Activated CD8-positive, alpha-beta T cell treated with anti-CD3 and anti-CD28 coated beads, Interleukin-2, amount 10 ng/mL, durations not matched to agents 7 days and 5 days (primary cell): ENCODE measurements at regions of chr12 and their contacts with region 1.

Region 1: GRCh38 chr12:54749191-54749818 is 101.1 kb upstream of the DCD start:
- DNase-seq: peak; percentile 71
- ATAC-seq: peak; percentile 93
- H3K4me3 Mint-ChIP-seq: peak overlapping the region; percentile 55
- H3K27ac Mint-ChIP-seq: peak overlapping the region; percentile 16
- H3K4me1 Mint-ChIP-seq: peaks cover 21% of the 10 kb centered on the region
- H3K27me3 Mint-ChIP-seq: no peaks in the 10 kb centered on the region

Region 2: DNA sequence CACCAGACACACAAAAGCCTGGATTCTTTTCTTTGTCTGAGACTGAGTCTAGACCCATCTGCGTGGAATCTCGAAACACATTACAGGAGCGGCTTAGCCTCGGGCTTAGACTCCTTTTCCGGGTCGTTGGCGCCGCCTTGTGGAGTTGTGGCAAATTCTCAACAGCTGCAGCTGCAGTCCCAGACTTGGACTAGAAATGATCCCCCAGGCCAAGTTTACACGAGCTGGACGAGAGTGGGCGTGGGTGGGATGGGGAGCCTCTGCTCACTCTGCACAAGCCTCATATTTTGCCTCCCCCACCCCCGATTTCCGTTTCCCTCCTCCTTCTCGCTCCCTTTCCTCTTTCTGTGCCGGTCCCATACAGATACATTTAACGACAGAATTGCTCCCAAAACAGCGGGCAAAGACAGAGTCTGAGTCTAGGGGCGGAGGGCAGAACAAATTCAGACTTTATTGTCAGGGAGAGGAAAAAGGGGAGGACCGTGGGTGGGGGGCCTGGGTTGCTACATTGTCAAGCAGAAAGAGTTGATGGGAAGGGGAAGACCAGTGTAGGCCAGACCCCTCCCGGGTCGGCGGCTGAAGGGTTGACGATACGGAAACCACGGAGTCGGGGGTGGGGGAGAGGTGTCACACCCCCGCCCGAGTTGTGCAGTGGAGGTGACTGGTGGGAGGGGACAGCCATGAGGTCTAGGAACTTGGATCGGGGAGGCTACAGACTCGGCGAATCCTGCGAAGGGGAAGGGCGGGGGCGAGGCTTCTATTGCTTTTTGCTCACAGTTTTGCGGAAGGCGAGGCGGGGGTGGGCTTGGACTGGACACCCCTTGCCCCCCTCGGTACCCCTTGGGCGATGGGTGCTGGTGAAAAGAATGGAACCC is 380.4 kb before region 1 on chr12:
- CTCF ChIA-PET with region 1: no interaction called
- POLR2A ChIA-PET with region 1: no interaction called
- DNase-seq: peak; percentile 93
- ATAC-seq: peak; percentile 89
- H3K4me3 Mint-ChIP-seq: no peak overlapping the region
- H3K27ac Mint-ChIP-seq: peak overlapping the region; percentile 32
- H3K4me1 Mint-ChIP-seq: peaks cover 52% of the 10 kb centered on the region
- H3K27me3 Mint-ChIP-seq: peaks cover 4% of the 10 kb centered on the region

Region 3: DNA sequence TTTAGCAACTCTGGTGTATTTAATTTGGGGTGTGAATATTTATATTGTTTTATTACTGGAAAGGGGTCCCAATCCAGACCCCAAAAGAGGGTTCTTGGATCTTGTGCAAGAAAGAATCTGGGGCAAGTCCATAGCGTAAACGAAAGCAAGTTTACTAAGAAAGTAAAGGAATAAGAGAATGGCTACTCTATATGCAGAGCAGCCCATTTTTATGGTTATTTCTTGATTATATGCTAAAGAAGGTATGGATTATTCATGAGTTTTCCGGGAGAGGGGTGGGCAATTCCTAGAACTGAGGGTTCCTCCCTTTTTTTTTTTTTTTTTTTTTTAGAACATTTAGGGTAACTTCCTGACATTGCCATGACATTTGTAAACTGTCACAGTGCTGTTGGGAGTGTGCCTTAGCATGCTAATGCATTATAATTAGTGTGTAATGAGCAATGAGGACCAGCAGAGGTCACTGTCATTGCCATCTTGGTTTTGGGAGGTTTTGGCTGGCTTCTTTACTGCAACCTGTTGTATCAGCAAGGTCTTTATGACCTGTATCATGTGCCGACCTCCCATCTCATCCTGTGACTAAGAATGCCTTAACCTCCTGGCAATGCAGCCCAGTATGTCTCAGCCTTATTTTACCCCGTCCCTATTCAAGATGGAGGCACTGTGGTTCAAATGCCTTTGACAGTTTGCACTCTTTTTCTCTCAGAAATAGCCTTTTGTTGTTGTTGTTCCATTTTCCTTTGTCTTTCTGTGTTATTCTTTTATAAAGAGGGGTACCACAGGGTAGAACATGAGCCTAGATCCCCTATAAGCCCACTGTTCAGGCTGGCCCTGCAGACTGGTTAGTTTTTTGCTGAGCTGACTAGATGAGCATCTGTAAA is 25.7 kb before region 1 on chr12:
- CTCF ChIA-PET with region 1: interaction called, 29 read pairs
- POLR2A ChIA-PET with region 1: no interaction called
- DNase-seq: peak; percentile 58
- ATAC-seq: peak; percentile 57
- H3K4me3 Mint-ChIP-seq: no peak overlapping the region
- H3K27ac Mint-ChIP-seq: no peak overlapping the region
- H3K4me1 Mint-ChIP-seq: peaks cover 10% of the 10 kb centered on the region
- H3K27me3 Mint-ChIP-seq: peaks cover 20% of the 10 kb centered on the region

Region 4: DNA sequence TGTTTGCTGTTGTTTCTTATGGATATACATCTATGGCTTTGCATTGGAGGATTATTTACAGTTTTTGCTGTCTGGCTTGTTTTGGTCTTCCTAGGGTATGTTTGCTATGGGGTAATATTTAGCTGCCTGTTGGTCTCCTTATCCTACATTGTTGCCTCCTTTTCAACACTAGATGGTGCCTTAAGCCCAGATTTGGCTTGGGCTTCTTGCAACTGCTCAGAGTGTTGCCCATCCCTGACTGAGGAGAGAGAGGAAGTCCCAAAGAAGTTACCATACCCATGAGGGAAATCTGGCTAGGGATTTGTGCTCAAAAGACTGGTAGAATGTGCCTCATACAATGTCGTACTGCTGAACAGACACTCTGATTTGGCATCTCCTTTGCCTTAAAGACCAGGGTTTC is 10.4 kb after region 1 on chr12:
- CTCF ChIA-PET with region 1: interaction called, 50 read pairs
- POLR2A ChIA-PET with region 1: no interaction called
- DNase-seq: peak; percentile 33
- ATAC-seq: no peak
- H3K4me3 Mint-ChIP-seq: no peak overlapping the region
- H3K27ac Mint-ChIP-seq: no peak overlapping the region
- H3K4me1 Mint-ChIP-seq: peaks cover 12% of the 10 kb centered on the region
- H3K27me3 Mint-ChIP-seq: no peaks in the 10 kb centered on the region

Region 5: DNA sequence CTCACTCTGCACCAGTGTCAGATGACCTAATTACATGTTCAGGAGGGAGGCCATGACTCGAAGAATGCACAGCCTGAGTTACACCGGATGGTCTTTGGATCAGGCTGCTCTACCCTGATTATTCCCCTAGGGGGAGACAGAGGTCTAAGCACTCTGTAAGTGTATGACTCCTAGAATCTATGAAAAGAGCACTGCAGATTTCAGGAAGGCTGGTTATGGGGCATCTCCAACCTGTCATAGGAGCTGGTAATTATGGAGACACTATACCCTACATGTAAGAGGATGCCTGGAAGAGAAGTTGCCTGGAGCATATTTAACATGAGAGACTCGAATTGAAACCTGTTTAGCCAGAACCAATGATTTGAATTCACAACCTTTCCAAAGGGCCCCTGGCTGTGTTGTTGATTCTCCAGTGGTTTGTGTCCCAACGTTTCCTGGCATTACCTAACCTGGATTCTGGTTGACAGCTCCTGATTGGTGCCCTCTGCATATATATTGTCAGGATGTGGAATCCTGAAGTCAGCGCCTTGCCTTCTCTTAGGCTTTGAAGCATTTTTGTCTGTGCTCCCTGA is 104.8 kb after region 1 on chr12 and contains the start of gene MUCL1:
- CTCF ChIA-PET with region 1: interaction called, 24 read pairs
- POLR2A ChIA-PET with region 1: no interaction called
- DNase-seq: peak; percentile 87
- ATAC-seq: peak; percentile 99
- H3K4me3 Mint-ChIP-seq: no peak within 1 kb of the TSS
- H3K27ac Mint-ChIP-seq: no peak within 1 kb of the TSS
- H3K4me1 Mint-ChIP-seq: peaks cover 13% of the 10 kb centered on the region
- H3K27me3 Mint-ChIP-seq: no peaks in the 10 kb centered on the region
- total RNA-seq, gene MUCL1: not detected

Region 6: GRCh38 chr12:54958048-54958658 is 208.8 kb after region 1 on chr12:
- CTCF ChIA-PET with region 1: interaction called, 107 read pairs
- POLR2A ChIA-PET with region 1: no interaction called
- DNase-seq: peak; percentile 65
- ATAC-seq: peak; percentile 43
- H3K4me3 Mint-ChIP-seq: no peak overlapping the region
- H3K27ac Mint-ChIP-seq: no peak overlapping the region
- H3K4me1 Mint-ChIP-seq: peaks cover 67% of the 10 kb centered on the region
- H3K27me3 Mint-ChIP-seq: no peaks in the 10 kb centered on the region

Region 7: GRCh38 chr12:54984658-54985376 is 235.5 kb after region 1 on chr12 and contains the start of gene TESPA1:
- CTCF ChIA-PET with region 1: interaction called, 43 read pairs
- POLR2A ChIA-PET with region 1: interaction called, 4 read pairs
- DNase-seq: peak; percentile 94
- ATAC-seq: peak; percentile 85
- H3K4me3 Mint-ChIP-seq: peak within 1 kb of the TSS; percentile 91
- H3K27ac Mint-ChIP-seq: peak within 1 kb of the TSS; percentile 86
- H3K4me1 Mint-ChIP-seq: peaks cover 66% of the 10 kb centered on the region
- H3K27me3 Mint-ChIP-seq: no peaks in the 10 kb centered on the region
- total RNA-seq, gene TESPA1: 81.0 to 84.6 TPM

Region 8: DNA sequence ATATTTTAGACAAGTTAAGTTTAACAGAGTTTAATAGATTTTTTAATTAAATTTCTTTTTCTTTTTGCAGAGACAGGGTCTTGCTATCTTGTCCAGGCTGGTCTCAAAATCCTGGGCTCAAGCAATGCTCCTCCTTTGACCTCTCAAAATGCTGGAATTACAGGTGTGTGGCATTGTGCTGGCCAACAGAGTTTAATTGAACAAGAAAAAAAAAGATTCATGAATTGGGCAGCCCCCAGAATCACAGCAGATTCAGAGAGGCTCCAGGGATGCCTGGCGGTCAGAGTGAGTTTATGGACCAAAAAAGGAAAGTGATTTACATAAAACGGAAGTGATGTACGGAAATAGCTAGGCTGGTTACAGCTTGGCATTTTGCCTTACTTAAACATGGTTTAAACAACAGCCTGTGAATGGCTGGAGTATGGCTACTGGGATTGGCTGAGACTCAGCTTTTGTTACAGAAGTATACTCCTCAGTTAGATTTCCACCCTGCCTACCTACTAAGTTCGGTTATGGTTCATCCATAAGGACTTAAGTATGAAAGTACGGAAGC is 249.7 kb after region 1 on chr12:
- CTCF ChIA-PET with region 1: interaction called, 62 read pairs
- POLR2A ChIA-PET with region 1: no interaction called
- DNase-seq: no peak
- ATAC-seq: no peak
- H3K4me3 Mint-ChIP-seq: no peak overlapping the region
- H3K27ac Mint-ChIP-seq: no peak overlapping the region
- H3K4me1 Mint-ChIP-seq: peaks cover 5% of the 10 kb centered on the region
- H3K27me3 Mint-ChIP-seq: no peaks in the 10 kb centered on the region